ENCODE measurements at regions of chr11 and their contacts with region 1.

Region 1: DNA sequence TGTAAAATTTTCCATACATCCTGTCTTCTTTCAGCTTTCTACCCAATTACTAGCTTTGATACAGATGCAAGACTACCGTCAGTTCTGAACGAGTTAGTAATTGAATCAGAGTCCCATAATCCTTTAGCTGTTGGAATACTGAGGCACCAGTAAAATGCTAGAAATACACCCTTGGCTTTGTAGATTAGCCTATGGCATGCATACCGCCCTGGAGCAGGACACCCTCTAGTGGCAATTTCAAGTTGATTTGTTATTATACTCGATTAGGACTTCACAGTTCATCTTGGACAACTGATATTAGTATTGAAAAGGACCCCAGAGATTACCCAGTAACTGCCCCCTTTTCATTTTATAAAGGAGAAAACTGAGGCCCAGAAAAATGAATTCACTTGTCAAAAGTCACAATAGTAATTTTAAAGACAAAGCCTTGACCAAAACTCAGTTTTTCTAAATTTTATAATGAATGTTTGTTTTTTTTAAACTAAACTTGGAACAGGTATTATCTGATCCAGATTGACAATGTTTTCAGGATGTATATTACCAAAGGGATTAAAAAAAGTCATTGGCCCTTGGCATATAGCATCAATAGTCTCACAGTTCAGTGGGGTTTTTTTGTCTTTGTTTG is 72.6 kb downstream of the HIPK3 start:
- DNase-seq: peak in 2 of 4 donors; percentile 36 to 73
- ATAC-seq: peak; percentile 93
- H3K4me3 ChIP-seq: no peak overlapping the region
- H3K27ac ChIP-seq: no peak overlapping the region
- H3K4me1 ChIP-seq: peaks cover 0 to 50% of the 10 kb centered on the region in 2 donors
- H3K27me3 ChIP-seq: no peaks in the 10 kb centered on the region
- CTCF ChIP-seq: peak in 1 of 2 donors; percentile 49

Region 2: DNA sequence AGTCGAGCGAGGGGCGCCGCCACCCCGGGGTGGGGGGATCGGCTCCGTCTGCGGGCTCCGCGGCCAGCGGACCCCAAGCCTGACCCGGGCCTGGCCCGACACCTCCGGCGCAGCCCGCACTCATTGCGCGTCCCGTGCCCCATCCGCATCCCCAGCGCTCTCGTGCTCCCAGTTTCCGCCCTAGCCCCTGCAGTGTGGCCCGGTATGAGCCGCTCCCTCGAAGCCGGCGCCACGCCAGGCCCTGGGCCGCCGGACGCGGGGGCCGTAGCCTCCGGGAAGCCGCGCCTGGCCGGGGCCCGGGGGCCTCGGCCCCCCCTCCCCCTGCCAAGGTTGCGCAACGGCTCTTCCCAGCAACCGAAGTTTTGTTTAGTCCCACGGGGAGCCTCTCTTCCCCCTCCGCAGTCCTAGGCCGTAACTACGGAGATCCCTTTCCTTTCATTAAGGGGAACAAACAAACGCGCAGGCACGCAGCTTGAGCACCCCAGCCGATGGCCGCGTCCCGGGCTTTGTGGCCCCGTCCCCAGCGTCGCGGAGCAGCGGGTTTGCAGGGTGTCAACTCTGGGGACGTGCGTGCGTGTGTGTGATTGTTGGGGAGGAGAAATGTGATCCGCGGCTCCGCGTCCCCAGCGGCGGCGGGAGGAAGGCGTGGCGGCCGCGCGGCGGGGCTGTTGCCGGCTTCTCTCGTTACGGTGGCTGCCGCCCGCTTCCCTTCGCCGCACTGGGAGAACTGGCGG is 71.8 kb before region 1 on chr11:
- intact Hi-C with region 1: loop called in 1 of 2 experiments (anchors 10 kb)
- DNase-seq: peak; percentile 91 to 96 (median 92)
- ATAC-seq: peak; percentile 83
- H3K4me3 ChIP-seq: peak overlapping the region; percentile 63 to 67
- H3K27ac ChIP-seq: peak overlapping the region; percentile 100
- H3K4me1 ChIP-seq: peaks cover 19 to 42% of the 10 kb centered on the region in 2 donors
- H3K27me3 ChIP-seq: no peaks in the 10 kb centered on the region
- CTCF ChIP-seq: peak; percentile 21 to 40